Naive thymus-derived CD8-positive, alpha-beta T cell (primary cell): ENCODE measurements at regions of chr17 and their contacts with region 1.

Region 1: GRCh38 chr17:76737082-76737675 is at the start of gene SRSF2:
- DNase-seq: peak; percentile 96 to 100 (median 99)
- ATAC-seq: peak; percentile 69 to 71
- H3K4me3 Mint-ChIP-seq: peak within 1 kb of the TSS; percentile 95 to 98 (median 96)
- H3K27ac Mint-ChIP-seq: peak within 1 kb of the TSS; percentile 96 to 100 (median 98)
- H3K4me1 Mint-ChIP-seq: peaks cover 34 to 65% (median 55%) of the 10 kb centered on the region in 4 donors
- H3K27me3 Mint-ChIP-seq: no peaks in the 10 kb centered on the region
- polyA plus RNA-seq, gene SRSF2: 101 to 106 (median 105) TPM

Region 2: GRCh38 chr17:76714822-76715495 is 22.2 kb before region 1 on chr17:
- POLR2A ChIA-PET with region 1: interaction called, 93 read pairs
- DNase-seq: peak; percentile 45 to 86 (median 73)
- ATAC-seq: peak; percentile 3 to 4
- H3K4me3 Mint-ChIP-seq: peak overlapping the region; percentile 25 to 72 (median 62)
- H3K27ac Mint-ChIP-seq: peak overlapping the region; percentile 87 to 99 (median 96)
- H3K4me1 Mint-ChIP-seq: peaks cover 24 to 55% (median 49%) of the 10 kb centered on the region in 4 donors
- H3K27me3 Mint-ChIP-seq: no peaks in the 10 kb centered on the region

Region 3: GRCh38 chr17:76747716-76748363 is 10.7 kb after region 1 on chr17:
- POLR2A ChIA-PET with region 1: interaction called, 109 read pairs
- DNase-seq: no peak
- ATAC-seq: no peak
- H3K4me3 Mint-ChIP-seq: no peak overlapping the region
- H3K27ac Mint-ChIP-seq: no peak overlapping the region
- H3K4me1 Mint-ChIP-seq: peaks cover 5 to 11% (median 10%) of the 10 kb centered on the region in 4 donors
- H3K27me3 Mint-ChIP-seq: no peaks in the 10 kb centered on the region

Region 4: GRCh38 chr17:76772842-76773525 is 35.8 kb after region 1 on chr17:
- POLR2A ChIA-PET with region 1: interaction called, 26 read pairs
- DNase-seq: peak in 9 of 10 donors; percentile 14 to 73 (median 41)
- ATAC-seq: peak; percentile 86 to 90
- H3K4me3 Mint-ChIP-seq: peak overlapping the region; percentile 13 to 94 (median 79)
- H3K27ac Mint-ChIP-seq: peak overlapping the region; percentile 85 to 99 (median 91)
- H3K4me1 Mint-ChIP-seq: peaks cover 14 to 31% (median 19%) of the 10 kb centered on the region in 4 donors
- H3K27me3 Mint-ChIP-seq: no peaks in the 10 kb centered on the region